ENCODE measurements at regions of chr5 and their contacts with region 1.

Region 1: DNA sequence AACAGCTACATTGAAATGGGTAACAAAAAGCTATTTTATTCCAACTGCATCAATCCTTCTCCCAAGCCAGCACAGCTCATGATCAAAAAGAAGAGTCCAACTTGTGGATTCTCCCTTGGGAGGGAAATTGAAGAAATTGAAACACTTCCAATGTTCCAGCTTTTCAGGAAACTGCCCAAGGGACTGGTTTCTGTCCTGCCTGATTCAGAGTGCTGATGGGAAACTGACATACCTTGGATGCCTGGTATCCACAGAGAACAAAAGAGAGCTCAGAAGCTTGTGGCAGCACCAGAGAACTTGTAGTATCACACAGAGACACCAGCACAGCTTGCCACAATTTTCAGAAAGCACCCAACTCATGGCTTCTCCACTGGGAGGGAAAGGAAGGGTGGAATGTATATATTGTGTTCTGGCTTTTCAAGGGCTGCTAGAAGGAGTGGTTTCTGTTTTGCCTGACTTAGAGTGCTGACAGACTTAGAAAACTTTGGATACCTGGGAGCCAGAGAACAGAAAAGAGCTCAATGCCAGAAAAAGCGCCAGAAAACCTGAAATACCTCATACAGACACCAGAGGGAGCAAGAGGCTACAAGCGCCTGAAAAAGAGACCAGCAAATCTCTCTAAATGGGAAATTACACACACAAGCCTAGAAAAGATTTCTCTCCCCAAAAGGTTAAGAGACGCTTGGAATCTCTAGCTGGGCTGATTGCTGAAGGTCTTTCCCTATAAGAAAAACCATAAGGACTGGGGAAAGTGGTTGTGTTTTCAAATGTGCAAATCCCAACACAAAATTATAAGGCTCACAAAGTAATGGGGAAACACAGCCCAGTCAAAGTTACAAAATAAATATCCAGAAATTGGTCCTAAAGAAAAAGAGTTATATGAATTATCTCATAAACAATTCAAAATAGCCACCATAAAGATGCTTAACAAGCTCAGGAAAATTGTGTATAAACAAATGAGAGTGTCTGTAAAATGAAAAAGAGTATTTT is 178.8 kb downstream of the SPOCK1 start:
- DNase-seq: peak; percentile 8
- H3K4me3 ChIP-seq: no peak overlapping the region
- H3K27ac ChIP-seq: no peak overlapping the region
- H3K27me3 ChIP-seq: peaks cover 4% of the 10 kb centered on the region
- CTCF ChIP-seq: peak; percentile 90

Region 2: DNA sequence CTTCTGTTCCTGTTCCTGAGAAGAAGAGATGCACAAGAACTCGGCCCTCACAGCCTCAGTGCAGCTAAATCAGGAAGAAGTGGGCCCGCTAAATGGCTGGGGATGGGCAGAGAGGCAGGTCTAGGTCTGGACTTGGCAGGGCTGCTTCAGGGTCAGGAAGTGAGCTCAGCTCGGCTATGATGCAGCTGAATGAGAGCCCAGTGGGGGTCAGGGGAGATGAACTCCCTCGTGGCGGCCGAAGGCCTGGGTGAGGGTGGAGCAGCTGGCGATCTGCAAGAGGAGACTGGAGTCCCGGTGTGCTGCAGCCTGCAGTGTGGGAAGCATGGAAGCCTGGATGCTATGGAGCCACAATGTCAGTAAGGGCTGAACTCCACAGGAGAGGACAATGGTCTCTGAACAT is 287.4 kb before region 1 on chr5:
- CTCF ChIA-PET with region 1: no interaction called
- POLR2A ChIA-PET with region 1: no interaction called
- DNase-seq: no peak
- H3K4me3 ChIP-seq: no peak overlapping the region
- H3K27ac ChIP-seq: no peak overlapping the region
- H3K27me3 ChIP-seq: no peaks in the 10 kb centered on the region
- CTCF ChIP-seq: no peak

Region 3: GRCh38 chr5:137265457-137265856 is 54.9 kb before region 1 on chr5:
- CTCF ChIA-PET with region 1: interaction called, 11 read pairs
- POLR2A ChIA-PET with region 1: no interaction called
- DNase-seq: no peak
- H3K4me3 ChIP-seq: no peak overlapping the region
- H3K27ac ChIP-seq: no peak overlapping the region
- H3K27me3 ChIP-seq: no peaks in the 10 kb centered on the region
- CTCF ChIP-seq: no peak

Region 4: GRCh38 chr5:137310051-137310730 is 10.2 kb before region 1 on chr5:
- CTCF ChIA-PET with region 1: interaction called, 91 read pairs
- POLR2A ChIA-PET with region 1: no interaction called
- DNase-seq: peak; percentile 78
- H3K4me3 ChIP-seq: no peak overlapping the region
- H3K27ac ChIP-seq: no peak overlapping the region
- H3K27me3 ChIP-seq: no peaks in the 10 kb centered on the region
- CTCF ChIP-seq: no peak

Region 5: DNA sequence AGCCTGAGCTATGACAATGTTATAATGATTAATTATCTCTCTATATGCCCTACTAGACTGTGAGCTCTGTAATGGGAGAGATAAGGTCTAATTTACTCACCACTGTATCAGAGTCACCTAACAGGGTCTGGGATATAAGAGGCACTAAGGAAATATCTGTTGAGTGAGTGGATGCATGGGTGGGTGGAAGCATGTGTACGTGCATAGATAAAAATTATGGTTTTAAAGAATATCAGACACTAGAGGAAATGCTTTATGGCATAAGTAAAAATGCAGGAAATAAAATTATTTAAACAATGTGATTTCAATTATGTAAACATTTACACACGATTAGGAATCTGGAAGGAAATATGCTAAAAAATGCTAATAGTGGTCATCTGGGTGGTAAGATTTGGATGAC is 40.9 kb after region 1 on chr5:
- CTCF ChIA-PET with region 1: interaction called, 10 read pairs
- POLR2A ChIA-PET with region 1: no interaction called
- DNase-seq: no peak
- H3K4me3 ChIP-seq: no peak overlapping the region
- H3K27ac ChIP-seq: no peak overlapping the region
- H3K27me3 ChIP-seq: peaks cover under 1% of the 10 kb centered on the region
- CTCF ChIP-seq: no peak

Region 6: DNA sequence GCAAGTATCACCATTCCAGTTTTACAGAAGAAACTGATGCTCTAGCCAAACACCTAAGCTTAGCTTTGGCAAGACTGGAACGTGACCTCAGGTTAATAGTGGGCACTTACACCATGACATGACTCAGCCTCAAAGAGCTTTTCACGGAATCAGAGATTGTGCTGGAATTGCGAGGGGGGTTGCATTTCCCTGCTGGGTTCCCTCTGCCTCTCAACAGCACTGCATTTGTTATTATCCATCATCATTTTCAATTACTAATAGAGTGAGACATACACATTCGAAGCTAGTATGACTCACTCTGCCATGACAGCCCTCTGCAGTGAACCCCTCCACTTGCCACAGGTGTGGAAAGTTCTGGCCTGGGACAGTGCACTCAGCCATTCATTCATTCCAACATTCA is 170.8 kb after region 1 on chr5:
- CTCF ChIA-PET with region 1: interaction called, 127 read pairs
- POLR2A ChIA-PET with region 1: no interaction called
- DNase-seq: no peak
- H3K4me3 ChIP-seq: no peak overlapping the region
- H3K27ac ChIP-seq: no peak overlapping the region
- H3K27me3 ChIP-seq: no peaks in the 10 kb centered on the region
- CTCF ChIP-seq: no peak

Region 7: DNA sequence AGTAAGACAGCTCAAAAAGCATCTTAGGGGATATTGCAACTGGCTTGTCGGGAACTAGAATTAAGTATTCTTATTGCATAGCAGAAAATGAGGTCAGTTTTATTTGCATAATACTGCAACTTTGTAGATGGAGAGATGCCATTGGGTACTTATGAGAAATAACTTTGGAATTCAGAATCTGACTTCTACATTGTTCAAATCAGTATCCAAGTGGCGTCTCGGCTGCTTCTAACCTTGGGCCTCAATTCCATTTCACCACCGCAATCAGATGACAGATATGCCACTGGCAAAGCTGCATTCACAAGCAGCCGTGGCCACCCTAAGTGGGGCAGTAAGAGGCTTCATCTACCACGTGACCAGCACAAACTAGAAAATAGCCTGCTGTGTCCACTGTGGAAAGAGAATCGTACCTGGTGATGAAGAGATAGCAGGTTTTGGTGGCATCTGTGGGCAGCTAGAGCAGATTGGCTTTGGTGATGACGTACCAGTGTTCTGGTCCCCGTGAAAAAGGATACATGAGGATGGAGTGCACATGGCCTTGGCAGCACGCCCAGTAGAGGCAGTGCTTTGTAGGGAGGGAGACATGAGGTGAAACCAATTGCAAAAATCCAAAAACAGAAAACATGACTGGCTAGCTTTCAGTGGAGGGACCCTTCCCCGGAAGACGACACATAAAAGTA is 299.0 kb after region 1 on chr5:
- CTCF ChIA-PET with region 1: interaction called, 12 read pairs
- POLR2A ChIA-PET with region 1: no interaction called
- DNase-seq: peak; percentile 18
- H3K4me3 ChIP-seq: no peak overlapping the region
- H3K27ac ChIP-seq: no peak overlapping the region
- H3K27me3 ChIP-seq: no peaks in the 10 kb centered on the region
- CTCF ChIP-seq: no peak

Region 8: GRCh38 chr5:137880313-137880712 is 560.0 kb after region 1 on chr5:
- CTCF ChIA-PET with region 1: no interaction called
- POLR2A ChIA-PET with region 1: no interaction called
- DNase-seq: no peak
- H3K4me3 ChIP-seq: no peak overlapping the region
- H3K27ac ChIP-seq: no peak overlapping the region
- H3K27me3 ChIP-seq: no peaks in the 10 kb centered on the region
- CTCF ChIP-seq: no peak